ENCODE measurements at regions of chr5 and their contacts with region 1.

Region 1: DNA sequence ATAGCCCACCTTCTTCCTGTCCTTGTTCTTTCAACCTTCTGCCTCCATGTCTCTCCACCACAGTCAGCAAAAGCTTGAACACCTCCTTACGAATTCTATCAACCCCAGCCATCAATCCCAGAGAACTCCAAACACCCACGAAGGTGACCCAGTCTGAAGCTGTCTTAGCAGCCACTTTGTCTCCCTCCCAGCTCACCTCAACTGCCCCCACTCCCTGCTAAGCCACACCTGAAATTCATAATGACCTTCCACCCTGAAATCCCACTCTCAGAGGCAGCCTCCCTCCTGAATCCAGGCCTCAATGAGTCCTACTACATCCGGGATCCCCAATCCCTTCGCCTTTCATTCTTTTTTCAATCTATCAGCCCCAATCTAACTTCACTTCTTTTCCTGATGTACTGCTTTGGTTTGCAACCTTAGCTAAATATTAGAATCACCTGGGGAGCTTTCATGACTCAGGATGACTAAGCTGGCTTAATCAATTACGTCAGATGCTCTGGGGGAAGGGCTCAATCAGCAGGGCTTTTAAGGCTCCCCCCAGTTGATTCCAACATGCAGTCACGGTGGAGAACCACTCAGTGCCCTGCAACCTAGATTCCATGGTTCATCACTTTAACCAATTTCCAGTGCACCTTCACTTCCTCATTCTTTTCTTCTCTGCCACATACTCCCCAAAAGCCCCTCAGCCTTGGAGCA is 32.2 kb downstream of the BHMT start:
- DNase-seq: no peak
- H3K4me3 ChIP-seq: no peak overlapping the region
- H3K27ac ChIP-seq: no peak overlapping the region
- H3K4me1 ChIP-seq: peaks cover 0 to 29% (median 11%) of the 10 kb centered on the region in 4 donors
- H3K27me3 ChIP-seq: no peaks in the 10 kb centered on the region
- CTCF ChIP-seq: no peak
- EP300 ChIP-seq: no peak
- POLR2A ChIP-seq: no peak

Region 2: DNA sequence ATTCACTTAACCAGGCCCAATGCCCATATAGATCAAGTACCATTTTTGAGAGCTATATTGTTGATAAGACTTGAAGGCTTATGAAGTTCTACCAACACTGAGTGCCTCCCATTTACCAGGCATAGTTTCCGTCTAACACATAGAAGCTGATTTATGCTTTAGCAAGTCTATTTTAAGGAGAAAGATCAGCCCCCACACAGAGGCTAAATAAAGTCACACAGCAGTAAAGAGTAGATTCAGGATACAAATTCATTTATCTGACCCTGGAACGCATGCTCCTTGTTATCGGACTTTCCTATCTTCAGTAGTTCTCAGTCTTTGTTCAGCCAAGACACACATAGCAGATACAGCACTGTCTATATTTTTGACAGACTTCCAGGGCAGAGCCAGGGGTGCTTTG is 108.6 kb before region 1 on chr5:
- intact Hi-C with region 1: no loop called
- DNase-seq: no peak
- H3K4me3 ChIP-seq: no peak overlapping the region
- H3K27ac ChIP-seq: no peak overlapping the region
- H3K4me1 ChIP-seq: no peaks in the 10 kb centered on the region
- H3K27me3 ChIP-seq: no peaks in the 10 kb centered on the region
- CTCF ChIP-seq: no peak
- EP300 ChIP-seq: no peak
- POLR2A ChIP-seq: no peak

Region 3: GRCh38 chr5:79200573-79201183 is 56.8 kb after region 1 on chr5:
- intact Hi-C with region 1: loop called (anchors 10 kb)
- DNase-seq: no peak
- H3K4me3 ChIP-seq: no peak overlapping the region
- H3K27ac ChIP-seq: no peak overlapping the region
- H3K4me1 ChIP-seq: no peaks in the 10 kb centered on the region
- H3K27me3 ChIP-seq: no peaks in the 10 kb centered on the region
- CTCF ChIP-seq: peak; percentile 48 to 58 (median 57)
- EP300 ChIP-seq: no peak
- POLR2A ChIP-seq: no peak

Measured in esophagus muscularis mucosa (tissue), 4 donors.